ENCODE measurements at regions of chr5 and their contacts with region 1.

Region 1: GRCh38 chr5:68287976-68288706 is 72.6 kb downstream of the PIK3R1 start:
- DNase-seq: peak; percentile 77
- ATAC-seq: peak; percentile 85
- H3K4me3 ChIP-seq: peak overlapping the region; percentile 77
- H3K27ac ChIP-seq: peak overlapping the region; percentile 94
- H3K4me1 ChIP-seq: peaks cover 53% of the 10 kb centered on the region
- H3K27me3 ChIP-seq: no peaks in the 10 kb centered on the region
- CTCF ChIP-seq: no peak
- EP300 ChIP-seq: peak; percentile 16 to 52; a peak in 1 of 4 replicates
- POLR2A ChIP-seq: peak; percentile 78
- RAD21 ChIP-seq: 0 out of 2 replicates have a peak, but pooled peaks have one; percentile 9

Region 2: GRCh38 chr5:68315679-68316271 is 27.6 kb after region 1 on chr5:
- CTCF ChIA-PET with region 1: interaction called, 13 read pairs
- POLR2A ChIA-PET with region 1: no interaction called
- RAD21 ChIA-PET with region 1: interaction called, 14 read pairs
- SMC1A ChIA-PET with region 1: interaction called, 8 read pairs
- in situ Hi-C with region 1: no loop called
- intact Hi-C with region 1: no loop called
- DNase-seq: peak; percentile 55
- ATAC-seq: peak; percentile 100
- H3K4me3 ChIP-seq: no peak overlapping the region
- H3K27ac ChIP-seq: no peak overlapping the region
- H3K4me1 ChIP-seq: peaks cover 13% of the 10 kb centered on the region
- H3K27me3 ChIP-seq: no peaks in the 10 kb centered on the region
- CTCF ChIP-seq: no peak
- EP300 ChIP-seq: 0 out of 4 replicates have a peak, but pooled peaks of 1 of the 2 experiments have one; percentile 28
- POLR2A ChIP-seq: no peak
- RAD21 ChIP-seq: no peak

Region 3: GRCh38 chr5:68406767-68407241 is 118.7 kb after region 1 on chr5:
- CTCF ChIA-PET with region 1: interaction called, 16 read pairs
- POLR2A ChIA-PET with region 1: interaction called, 3 read pairs
- RAD21 ChIA-PET with region 1: interaction called, 32 read pairs
- SMC1A ChIA-PET with region 1: interaction called, 22 read pairs
- in situ Hi-C with region 1: no loop called
- intact Hi-C with region 1: no loop called
- DNase-seq: peak; percentile 26
- ATAC-seq: peak; percentile 95
- H3K4me3 ChIP-seq: no peak overlapping the region; the same call in 1 of the 2 replicates
- H3K27ac ChIP-seq: peak overlapping the region; percentile 10; the same call in 1 of the 2 replicates
- H3K4me1 ChIP-seq: peaks cover 5% of the 10 kb centered on the region
- H3K27me3 ChIP-seq: no peaks in the 10 kb centered on the region
- CTCF ChIP-seq: no peak
- EP300 ChIP-seq: no peak
- POLR2A ChIP-seq: no peak
- RAD21 ChIP-seq: no peak

Region 4: GRCh38 chr5:68455216-68455615 is 167.1 kb after region 1 on chr5:
- CTCF ChIA-PET with region 1: interaction called, 165 read pairs
- POLR2A ChIA-PET with region 1: interaction called, 11 read pairs
- RAD21 ChIA-PET with region 1: interaction called, 113 read pairs
- SMC1A ChIA-PET with region 1: interaction called, 182 read pairs
- in situ Hi-C with region 1: loop called (anchors 5 kb)
- intact Hi-C with region 1: loop called (anchors 1 kb)
- DNase-seq: no peak
- ATAC-seq: no peak
- H3K4me3 ChIP-seq: no peak overlapping the region
- H3K27ac ChIP-seq: no peak overlapping the region
- H3K4me1 ChIP-seq: no peaks in the 10 kb centered on the region; the same call in 1 of the 2 replicates
- H3K27me3 ChIP-seq: no peaks in the 10 kb centered on the region
- CTCF ChIP-seq: no peak
- EP300 ChIP-seq: no peak
- POLR2A ChIP-seq: no peak
- RAD21 ChIP-seq: no peak

Region 5: GRCh38 chr5:68644971-68645370 is 356.8 kb after region 1 on chr5:
- CTCF ChIA-PET with region 1: interaction called, 30 read pairs
- POLR2A ChIA-PET with region 1: no interaction called
- RAD21 ChIA-PET with region 1: interaction called, 20 read pairs
- SMC1A ChIA-PET with region 1: interaction called, 21 read pairs
- in situ Hi-C with region 1: no loop called
- intact Hi-C with region 1: loop called (anchors 5 kb)
- DNase-seq: peak; percentile 83
- ATAC-seq: peak; percentile 97
- H3K4me3 ChIP-seq: no peak overlapping the region
- H3K27ac ChIP-seq: no peak overlapping the region
- H3K4me1 ChIP-seq: peaks cover 13% of the 10 kb centered on the region; the same call in 1 of the 2 replicates
- H3K27me3 ChIP-seq: no peaks in the 10 kb centered on the region
- CTCF ChIP-seq: no peak
- EP300 ChIP-seq: peak; percentile 14 to 57; a peak in 2 of 4 replicates
- POLR2A ChIP-seq: no peak
- RAD21 ChIP-seq: peak; percentile 36

Region 6: DNA sequence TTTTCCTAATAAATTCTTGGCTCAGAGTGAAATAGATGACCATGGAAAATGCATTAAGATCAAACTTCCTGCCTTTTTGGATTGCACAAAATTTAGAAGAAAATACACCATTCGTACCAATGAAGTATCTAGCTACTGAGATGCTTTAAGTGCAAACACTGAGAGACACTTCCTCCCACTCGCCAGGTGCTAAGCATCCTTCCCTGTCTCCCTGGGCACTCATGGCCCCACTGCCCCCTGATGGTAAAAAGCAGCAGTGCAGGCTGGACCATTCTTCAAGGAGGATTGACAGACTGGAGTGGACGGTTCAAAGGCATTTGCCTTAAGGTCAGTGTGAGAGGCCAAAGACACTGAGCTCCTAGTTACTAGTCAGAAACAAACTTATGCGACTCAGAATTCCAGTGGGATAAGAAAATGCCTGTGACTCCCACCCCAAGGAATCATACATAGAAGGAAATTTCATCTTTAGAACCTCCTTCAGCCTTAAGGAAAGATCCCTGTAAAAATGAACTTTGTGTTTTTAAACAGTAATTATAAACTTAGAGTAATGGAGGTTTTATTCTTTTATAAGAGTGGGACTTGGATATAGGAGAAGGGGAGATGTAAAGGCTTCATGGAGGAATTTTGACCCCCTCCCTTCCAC is 719.7 kb after region 1 on chr5:
- CTCF ChIA-PET with region 1: interaction called, 27 read pairs
- POLR2A ChIA-PET with region 1: no interaction called
- RAD21 ChIA-PET with region 1: interaction called, 10 read pairs
- SMC1A ChIA-PET with region 1: interaction called, 11 read pairs
- in situ Hi-C with region 1: loop called (anchors 10 kb)
- intact Hi-C with region 1: loop called (anchors 1 kb)
- DNase-seq: peak; percentile 8
- ATAC-seq: peak; percentile 98
- H3K4me3 ChIP-seq: no peak overlapping the region
- H3K27ac ChIP-seq: no peak overlapping the region
- H3K4me1 ChIP-seq: no peaks in the 10 kb centered on the region
- H3K27me3 ChIP-seq: peaks cover 0 to 2% of the 10 kb centered on the region in 2 experiments; a peak in 3 of 4 replicates
- CTCF ChIP-seq: peak; percentile 94 to 99 (median 94)
- EP300 ChIP-seq: no peak
- POLR2A ChIP-seq: no peak
- RAD21 ChIP-seq: peak; percentile 99